GM10248 (cell line): ENCODE measurements at regions of chr1 and their contacts with region 1.

Region 1: DNA sequence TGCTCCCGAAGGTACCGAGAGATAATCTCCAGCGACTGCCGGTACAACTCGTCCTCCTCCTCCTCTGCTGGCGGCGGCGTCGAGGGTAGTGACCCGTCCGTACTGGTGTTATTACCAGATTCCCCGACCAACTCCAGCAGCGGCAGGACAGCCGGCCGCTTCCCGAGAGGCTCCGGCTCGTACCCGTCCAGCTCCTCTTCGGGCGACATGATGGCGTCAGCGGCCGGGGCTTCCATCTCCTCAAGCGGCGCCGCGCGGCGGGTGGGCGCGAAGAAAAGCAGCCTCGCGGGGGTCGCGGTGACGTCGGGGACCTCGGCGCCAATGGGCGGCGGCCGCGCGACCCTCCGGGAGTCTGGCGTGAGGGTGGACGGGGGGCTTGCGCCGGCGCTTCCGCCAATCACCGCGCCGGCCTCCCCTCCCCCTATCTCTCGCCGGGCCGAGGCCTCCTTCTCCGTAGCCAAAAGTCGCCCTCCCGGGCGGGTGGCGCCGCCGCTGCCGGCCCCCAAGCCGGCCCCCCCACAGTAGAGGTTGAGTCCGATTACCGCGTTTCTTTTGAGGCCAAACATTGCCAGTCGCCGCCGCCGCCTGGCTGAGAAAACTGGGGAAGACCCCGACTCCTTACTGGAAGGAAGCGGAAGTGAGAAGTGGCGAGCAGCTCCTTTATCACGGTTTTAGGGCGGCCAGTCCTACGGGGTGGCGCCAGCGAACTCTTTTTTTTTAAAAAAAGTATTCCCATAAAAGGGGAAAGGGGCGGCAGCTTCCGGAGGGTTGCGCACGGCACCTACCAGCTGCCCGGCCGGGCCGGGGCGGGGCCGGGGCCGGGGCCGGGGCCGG is at the start of gene MCL1:
- DNase-seq: peak; percentile 94
- CTCF ChIP-seq: no peak

Region 2: GRCh38 chr1:150567717-150568593 is 11.2 kb before region 1 on chr1:
- CTCF ChIA-PET with region 1: interaction called, 149 read pairs
- POLR2A ChIA-PET with region 1: interaction called, 305 read pairs
- DNase-seq: peak; percentile 18
- CTCF ChIP-seq: no peak

Region 3: DNA sequence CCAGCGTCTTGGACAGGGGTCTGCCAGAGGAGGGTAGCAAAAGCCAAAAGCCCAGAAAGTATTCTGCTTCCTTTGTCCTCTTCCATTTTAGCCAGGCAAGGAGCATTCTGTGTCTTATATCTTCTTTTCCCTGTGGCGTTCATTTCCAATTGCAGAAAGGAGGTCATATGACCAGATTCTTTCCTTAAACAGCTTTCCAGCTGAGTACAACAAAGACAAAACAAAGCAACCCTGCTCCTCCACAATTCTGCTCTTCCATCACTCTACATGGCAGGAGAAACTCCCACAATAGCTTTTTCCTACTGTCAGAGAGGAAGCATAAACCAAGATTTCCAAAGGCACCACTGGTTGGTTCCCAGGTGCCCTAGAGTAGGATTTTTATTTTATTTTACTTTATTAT is 30.6 kb after region 1 on chr1:
- CTCF ChIA-PET with region 1: interaction called, 3 read pairs
- POLR2A ChIA-PET with region 1: interaction called, 11 read pairs
- DNase-seq: no peak
- CTCF ChIP-seq: no peak

Region 4: GRCh38 chr1:150621497-150622302 is 42.5 kb after region 1 on chr1:
- CTCF ChIA-PET with region 1: interaction called, 4 read pairs
- POLR2A ChIA-PET with region 1: interaction called, 23 read pairs
- DNase-seq: peak; percentile 55
- CTCF ChIP-seq: peak; percentile 65

Region 5: GRCh38 chr1:150629115-150629928 is 50.1 kb after region 1 on chr1 and contains the start of gene ENSA:
- CTCF ChIA-PET with region 1: no interaction called
- POLR2A ChIA-PET with region 1: interaction called, 17 read pairs
- DNase-seq: peak; percentile 94
- CTCF ChIP-seq: no peak

Region 6: DNA sequence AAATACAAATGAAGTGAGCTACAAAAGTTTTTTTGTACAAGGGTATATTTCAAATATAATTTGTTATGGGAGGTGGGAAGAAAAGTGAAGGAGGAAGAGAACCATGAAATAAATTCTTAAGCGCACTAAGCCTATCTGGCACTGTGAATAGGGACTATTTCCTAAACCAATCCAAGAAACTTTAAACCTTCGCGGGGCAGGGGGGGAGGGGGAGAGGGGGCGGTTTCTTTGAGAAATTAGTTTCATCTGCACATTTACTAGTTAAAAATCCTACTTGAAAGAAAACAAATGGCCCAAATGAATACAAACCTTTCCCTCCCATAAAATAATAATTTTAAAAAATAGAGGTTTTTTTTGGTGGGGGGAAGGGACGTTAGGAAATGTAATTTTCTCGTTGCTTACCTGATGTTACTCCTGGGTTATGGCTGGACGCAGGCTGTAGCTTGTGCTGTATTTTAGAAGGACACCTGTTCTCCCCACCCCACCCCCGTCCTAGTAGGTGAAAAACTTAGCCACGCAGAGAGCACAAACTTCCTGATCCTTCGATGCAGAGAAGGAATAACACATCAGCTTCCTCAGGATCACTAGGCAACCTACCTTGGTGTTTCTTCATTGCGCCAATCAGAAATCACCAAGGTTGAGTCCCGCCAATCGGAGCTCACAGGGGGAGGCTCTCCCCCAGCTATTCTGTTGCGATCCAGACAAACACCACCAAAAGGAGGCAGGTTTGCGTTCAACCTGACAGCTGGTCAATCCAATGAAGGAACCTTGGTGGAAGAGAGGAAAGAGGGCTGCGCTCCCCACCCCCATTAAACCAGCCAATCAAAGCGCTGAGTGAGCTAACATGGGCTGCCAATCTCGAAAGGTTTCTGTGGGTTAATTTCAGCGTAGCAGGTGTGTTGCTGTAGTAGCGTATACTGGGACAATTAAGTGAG is 117.7 kb after region 1 on chr1 and contains the start of gene GOLPH3L:
- CTCF ChIA-PET with region 1: no interaction called
- POLR2A ChIA-PET with region 1: interaction called, 13 read pairs
- DNase-seq: peak; percentile 86
- CTCF ChIP-seq: no peak